Heart right ventricle (tissue), 16 donors: ENCODE measurements at regions of chr12 and their contacts with region 1.

Region 1: GRCh38 chr12:75505706-75506312 is 5.6 kb downstream of the KRR1 start:
- DNase-seq: no peak
- ATAC-seq: no peak
- H3K4me3 ChIP-seq: no peak overlapping the region
- H3K27ac ChIP-seq: no peak overlapping the region
- H3K4me1 ChIP-seq: peaks cover 0 to 29% (median 23%) of the 10 kb centered on the region in 9 donors
- H3K27me3 ChIP-seq: no peaks in the 10 kb centered on the region
- CTCF ChIP-seq: peak in 8 of 9 donors; percentile 16 to 66 (median 58)

Region 2: DNA sequence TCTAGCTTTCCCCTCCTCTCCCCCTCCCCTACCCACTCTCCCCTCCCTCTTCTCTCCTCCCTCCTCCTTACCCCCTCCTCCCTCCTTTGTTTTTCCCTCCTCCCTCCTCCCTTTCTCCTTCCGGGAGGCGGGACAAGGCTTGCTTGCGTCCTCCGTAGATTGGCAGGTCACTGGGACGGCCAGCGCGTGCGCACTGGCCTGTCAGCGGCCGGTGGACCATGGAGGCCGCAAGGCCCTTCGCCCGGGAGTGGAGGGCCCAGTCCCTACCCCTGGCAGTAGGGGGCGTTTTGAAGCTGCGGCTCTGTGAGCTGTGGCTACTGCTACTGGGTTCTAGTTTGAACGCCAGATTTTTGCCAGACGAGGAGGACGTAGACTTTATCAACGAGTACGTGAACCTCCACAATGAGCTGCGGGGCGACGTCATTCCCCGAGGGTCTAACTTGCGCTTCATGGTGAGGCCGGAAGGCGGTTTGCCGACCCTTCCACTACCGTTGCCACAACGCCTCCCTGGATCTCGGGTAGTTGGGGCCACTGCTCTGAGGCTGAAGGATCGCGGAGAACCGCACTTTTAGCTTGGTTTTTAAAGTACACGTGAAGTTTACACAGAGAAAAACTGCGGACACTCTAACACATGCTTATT is 114.8 kb before region 1 on chr12 and contains the start of gene GLIPR1L2:
- intact Hi-C with region 1: loop called in 3 of 10 experiments (anchors 2 to 10 kb)
- DNase-seq: peak; percentile 95 to 96
- ATAC-seq: peak; percentile 99 to 100 (median 100)
- H3K4me3 ChIP-seq: peak within 1 kb of the TSS; percentile 25 to 70 (median 60)
- H3K27ac ChIP-seq: peak within 1 kb of the TSS; percentile 66 to 96 (median 89)
- H3K4me1 ChIP-seq: peaks cover 0 to 33% (median 24%) of the 10 kb centered on the region in 9 donors
- H3K27me3 ChIP-seq: no peaks in the 10 kb centered on the region
- CTCF ChIP-seq: peak; percentile 75 to 93 (median 82)
- total RNA-seq, gene GLIPR1L2: 0.66 to 2.9 (median 1.5) TPM